Head of caudate nucleus (tissue), 42 donors: ENCODE measurements at regions of chr5 and their contacts with region 1.

Region 1: GRCh38 chr5:90409318-90410177 is at the start of gene CETN3:
- DNase-seq: peak; percentile 89 to 98 (median 96)

Region 2: GRCh38 chr5:88883059-88883835 is 1526.3 kb before region 1 on chr5 and contains the start of gene MEF2C:
- intact Hi-C with region 1: loop called (anchors 10 kb)
- DNase-seq: peak; percentile 43 to 88 (median 71)

Region 3: DNA sequence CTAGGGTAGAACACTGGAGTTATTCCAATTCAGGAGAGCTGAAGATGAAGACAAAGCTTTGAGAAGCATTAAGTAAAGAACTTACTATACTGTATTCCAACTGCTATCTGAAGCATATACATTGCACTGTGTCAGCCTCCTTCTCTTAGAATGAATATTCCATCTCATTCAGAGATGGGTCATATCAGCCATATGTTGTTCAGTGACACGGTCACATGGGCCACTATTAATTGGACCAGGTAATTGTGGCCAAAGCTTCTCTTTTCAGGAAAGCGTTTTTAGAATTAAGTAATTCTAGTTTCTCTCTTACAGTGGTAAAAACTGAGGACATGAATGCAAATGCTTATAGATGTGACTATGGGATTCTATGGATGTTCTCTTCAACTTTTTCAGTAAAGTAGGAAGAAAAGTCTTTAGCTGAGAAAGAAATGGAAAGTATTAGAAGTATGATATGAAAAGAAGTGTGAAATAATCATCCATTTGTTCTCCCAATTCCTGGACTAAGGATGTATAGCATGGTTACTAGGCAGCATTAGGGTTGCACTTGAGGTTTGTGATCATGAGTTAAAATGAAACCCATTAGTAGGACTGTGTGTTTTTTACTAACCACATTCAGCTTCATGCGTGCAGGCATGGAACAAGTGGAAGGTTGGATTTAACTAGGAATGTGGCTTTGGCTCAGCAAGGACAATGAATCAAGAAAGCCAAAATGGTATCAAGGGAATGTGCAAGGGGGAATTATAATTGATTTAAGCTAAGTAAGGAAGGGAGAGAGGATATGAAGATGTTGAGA is 40.9 kb before region 1 on chr5:
- intact Hi-C with region 1: no loop called
- DNase-seq: no peak

Region 4: GRCh38 chr5:90558344-90559192 is 149.0 kb after region 1 on chr5 and contains the start of gene ADGRV1:
- intact Hi-C with region 1: no loop called
- DNase-seq: peak; percentile 42 to 92 (median 78)